Calu3 (cell line): ENCODE measurements at regions of chr22 and their contacts with region 1.

Region 1: GRCh38 chr22:35735542-35735941 is 17.9 kb downstream of the APOL5 start:
- DNase-seq: no peak
- H3K4me3 Mint-ChIP-seq: no peak overlapping the region
- H3K27ac Mint-ChIP-seq: no peak overlapping the region
- H3K4me1 Mint-ChIP-seq: no peaks in the 10 kb centered on the region
- H3K27me3 Mint-ChIP-seq: peaks cover 22% of the 10 kb centered on the region
- CTCF ChIP-seq: no peak

Region 2: GRCh38 chr22:35821654-35822053 is 86.1 kb after region 1 on chr22:
- CTCF ChIA-PET with region 1: interaction called, 13 read pairs
- intact Hi-C with region 1: no loop called
- DNase-seq: no peak
- H3K4me3 Mint-ChIP-seq: no peak overlapping the region
- H3K27ac Mint-ChIP-seq: no peak overlapping the region
- H3K4me1 Mint-ChIP-seq: peaks cover 29% of the 10 kb centered on the region
- H3K27me3 Mint-ChIP-seq: no peaks in the 10 kb centered on the region
- CTCF ChIP-seq: no peak